ENCODE measurements at regions of chr5 and their contacts with region 1.

Region 1: DNA sequence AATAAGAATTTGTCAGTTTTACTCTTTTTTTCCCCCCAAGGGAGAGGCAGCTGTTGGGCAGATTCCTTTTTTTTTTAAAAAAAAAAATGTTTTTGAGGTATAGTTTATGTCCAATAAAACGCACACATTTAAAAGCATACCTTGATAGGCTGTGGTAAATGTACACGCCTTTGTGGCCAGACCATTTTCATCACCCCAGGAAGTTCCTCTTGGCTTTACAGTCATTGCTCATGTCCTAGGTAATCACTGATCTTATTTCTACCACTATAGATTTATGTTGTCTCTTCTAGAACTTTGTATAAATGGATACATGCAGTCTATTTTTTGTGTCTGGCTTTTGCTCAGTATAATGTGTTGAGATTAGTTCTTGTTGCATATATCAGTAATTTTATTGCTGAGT is 9.8 kb downstream of the SUB1 start:
- DNase-seq: no peak
- ATAC-seq: peak; percentile 20
- H3K4me3 ChIP-seq: no peak overlapping the region
- H3K4me3 Mint-ChIP-seq: peak overlapping the region in 5 of 10 donors; percentile 15 to 54 (median 37)
- H3K27ac ChIP-seq: no peak overlapping the region
- H3K27ac Mint-ChIP-seq: peak overlapping the region in 4 of 9 donors; percentile 24 to 63 (median 48)
- H3K4me1 ChIP-seq: peaks cover 27 to 33% of the 10 kb centered on the region in 2 donors
- H3K4me1 Mint-ChIP-seq: peaks cover 55 to 94% (median 85%) of the 10 kb centered on the region in 7 donors
- H3K27me3 ChIP-seq: no peaks in the 10 kb centered on the region
- H3K27me3 Mint-ChIP-seq: no peaks in the 10 kb centered on the region

Region 2: DNA sequence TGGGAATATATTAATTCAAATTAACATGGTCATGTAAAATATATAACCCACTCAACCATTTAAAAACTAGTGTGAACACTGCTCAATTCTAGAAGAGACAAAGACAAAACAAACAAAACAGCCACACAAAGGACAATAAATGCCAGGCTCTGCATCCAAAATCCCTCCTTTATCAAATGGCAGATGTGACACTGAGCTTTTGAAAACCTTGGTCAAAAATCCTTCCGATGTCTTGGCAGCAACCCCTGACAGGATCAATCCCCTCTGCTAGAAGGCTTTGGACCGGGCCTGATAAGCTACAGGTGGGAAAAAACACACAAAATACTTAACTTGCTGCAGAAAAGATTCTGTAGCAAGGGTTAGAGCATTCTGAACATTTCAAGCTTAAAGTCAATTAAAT is 212.1 kb before region 1 on chr5:
- CTCF ChIA-PET with region 1: interaction called, 3 read pairs
- POLR2A ChIA-PET with region 1: no interaction called
- intact Hi-C with region 1: loop called in 1 of 2 experiments (anchors 5 kb)
- DNase-seq: no peak
- ATAC-seq: no peak
- H3K4me3 ChIP-seq: no peak overlapping the region
- H3K4me3 Mint-ChIP-seq: no peak overlapping the region
- H3K27ac ChIP-seq: no peak overlapping the region
- H3K27ac Mint-ChIP-seq: no peak overlapping the region
- H3K4me1 ChIP-seq: no peaks in the 10 kb centered on the region
- H3K4me1 Mint-ChIP-seq: peaks cover 0 to 4% (median 0%) of the 10 kb centered on the region in 7 donors
- H3K27me3 ChIP-seq: no peaks in the 10 kb centered on the region
- H3K27me3 Mint-ChIP-seq: no peaks in the 10 kb centered on the region

Region 3: DNA sequence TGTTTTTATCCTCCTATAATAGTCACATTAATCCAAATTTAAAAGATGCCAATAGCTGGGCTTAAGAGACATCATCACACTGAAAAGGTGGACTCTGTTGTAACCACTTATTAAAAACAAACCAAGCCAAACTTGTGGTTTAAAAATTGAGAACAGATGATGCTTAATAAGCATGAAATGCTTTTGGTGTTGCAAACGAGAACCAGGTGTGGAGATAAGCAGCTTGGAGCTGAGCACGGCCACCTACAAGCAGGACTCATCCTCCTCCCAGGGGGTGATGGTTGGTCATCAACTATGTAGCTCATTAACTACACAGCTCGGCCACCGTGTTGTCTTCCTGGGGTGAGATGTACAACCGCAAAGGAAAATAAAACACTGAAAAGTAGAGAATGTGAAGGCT is 270.4 kb after region 1 on chr5:
- CTCF ChIA-PET with region 1: no interaction called
- POLR2A ChIA-PET with region 1: no interaction called
- intact Hi-C with region 1: no loop called
- DNase-seq: no peak
- ATAC-seq: no peak
- H3K4me3 ChIP-seq: no peak overlapping the region
- H3K4me3 Mint-ChIP-seq: no peak overlapping the region
- H3K27ac ChIP-seq: no peak overlapping the region
- H3K27ac Mint-ChIP-seq: no peak overlapping the region
- H3K4me1 ChIP-seq: no peaks in the 10 kb centered on the region
- H3K4me1 Mint-ChIP-seq: no peaks in the 10 kb centered on the region
- H3K27me3 ChIP-seq: no peaks in the 10 kb centered on the region
- H3K27me3 Mint-ChIP-seq: no peaks in the 10 kb centered on the region